Calu3 (cell line): ENCODE measurements at regions of chrX and their contacts with region 1.

Region 1: GRCh38 chrX:12825801-12826200 is 34.6 kb downstream of the PRPS2 start:
- DNase-seq: peak; percentile 63
- H3K4me3 Mint-ChIP-seq: no peak overlapping the region
- H3K27ac Mint-ChIP-seq: peak overlapping the region; percentile 81
- H3K4me1 Mint-ChIP-seq: peaks cover 22% of the 10 kb centered on the region
- H3K27me3 Mint-ChIP-seq: no peaks in the 10 kb centered on the region
- CTCF ChIP-seq: no peak

Region 2: GRCh38 chrX:12894074-12895030 is 68.6 kb after region 1 on chrX:
- CTCF ChIA-PET with region 1: no interaction called
- intact Hi-C with region 1: loop called (anchors 5 kb)
- DNase-seq: peak; percentile 40
- H3K4me3 Mint-ChIP-seq: no peak overlapping the region
- H3K27ac Mint-ChIP-seq: no peak overlapping the region
- H3K4me1 Mint-ChIP-seq: peaks cover 8% of the 10 kb centered on the region
- H3K27me3 Mint-ChIP-seq: no peaks in the 10 kb centered on the region
- CTCF ChIP-seq: peak; percentile 76

Region 3: GRCh38 chrX:13177921-13178566 is 352.2 kb after region 1 on chrX:
- CTCF ChIA-PET with region 1: no interaction called
- intact Hi-C with region 1: no loop called
- DNase-seq: no peak
- H3K4me3 Mint-ChIP-seq: no peak overlapping the region
- H3K27ac Mint-ChIP-seq: no peak overlapping the region
- H3K4me1 Mint-ChIP-seq: no peaks in the 10 kb centered on the region
- H3K27me3 Mint-ChIP-seq: no peaks in the 10 kb centered on the region
- CTCF ChIP-seq: no peak

Region 4: DNA sequence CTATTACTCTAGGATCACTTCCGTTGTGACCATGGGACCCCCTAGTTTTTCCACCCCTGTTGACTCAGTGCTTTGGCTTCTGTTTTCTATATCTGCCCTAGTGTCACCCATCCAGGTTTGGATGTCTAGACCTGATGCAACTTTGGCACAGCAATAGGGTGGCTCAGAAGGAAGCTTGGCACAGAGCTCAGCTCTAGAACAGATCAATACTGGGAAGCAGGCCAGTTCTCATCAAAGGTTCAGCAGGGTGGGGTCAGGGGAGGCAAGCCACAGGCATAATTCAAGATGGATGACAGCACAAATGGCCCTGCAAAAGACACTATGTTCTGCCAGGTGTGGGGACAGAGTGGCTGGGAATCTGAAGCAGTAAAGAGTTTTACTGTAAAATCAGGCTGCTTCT is 669.4 kb after region 1 on chrX:
- CTCF ChIA-PET with region 1: no interaction called
- intact Hi-C with region 1: loop called (anchors 10 kb)
- DNase-seq: peak; percentile 81
- H3K4me3 Mint-ChIP-seq: no peak overlapping the region
- H3K27ac Mint-ChIP-seq: peak overlapping the region; percentile 80
- H3K4me1 Mint-ChIP-seq: peaks cover 21% of the 10 kb centered on the region
- H3K27me3 Mint-ChIP-seq: no peaks in the 10 kb centered on the region
- CTCF ChIP-seq: no peak